ENCODE measurements at regions of chr6 and their contacts with region 1.

Region 1: GRCh38 chr6:77425671-77426070 is 37.6 kb downstream of the HTR1B start:
- DNase-seq: no peak
- ATAC-seq: no peak
- H3K4me3 ChIP-seq: no peak overlapping the region
- H3K27ac ChIP-seq: no peak overlapping the region
- H3K4me1 ChIP-seq: no peaks in the 10 kb centered on the region
- H3K27me3 ChIP-seq: no peaks in the 10 kb centered on the region
- CTCF ChIP-seq: no peak

Region 2: DNA sequence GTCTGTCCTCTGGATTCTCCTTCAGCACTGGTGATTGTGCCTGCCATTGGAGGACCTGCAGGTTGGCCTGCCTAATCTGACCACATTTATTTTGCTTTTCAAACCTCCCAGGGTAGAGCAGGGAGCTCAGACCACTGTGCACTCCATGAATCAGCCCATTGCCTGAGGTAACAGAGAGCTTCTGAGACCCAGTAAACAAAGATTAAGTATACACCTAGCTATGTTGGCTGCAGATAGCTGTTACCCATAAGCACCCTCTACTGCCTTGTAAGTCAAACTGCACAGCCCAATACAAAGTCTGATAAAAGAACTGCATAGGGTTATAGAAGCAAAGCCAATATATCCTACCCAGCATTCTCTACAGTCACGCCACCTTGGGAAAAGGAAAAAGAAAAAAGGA is 301.1 kb before region 1 on chr6:
- intact Hi-C with region 1: no loop called
- DNase-seq: no peak
- ATAC-seq: no peak
- H3K4me3 ChIP-seq: no peak overlapping the region
- H3K27ac ChIP-seq: no peak overlapping the region
- H3K4me1 ChIP-seq: no peaks in the 10 kb centered on the region
- H3K27me3 ChIP-seq: no peaks in the 10 kb centered on the region
- CTCF ChIP-seq: no peak

Region 3: DNA sequence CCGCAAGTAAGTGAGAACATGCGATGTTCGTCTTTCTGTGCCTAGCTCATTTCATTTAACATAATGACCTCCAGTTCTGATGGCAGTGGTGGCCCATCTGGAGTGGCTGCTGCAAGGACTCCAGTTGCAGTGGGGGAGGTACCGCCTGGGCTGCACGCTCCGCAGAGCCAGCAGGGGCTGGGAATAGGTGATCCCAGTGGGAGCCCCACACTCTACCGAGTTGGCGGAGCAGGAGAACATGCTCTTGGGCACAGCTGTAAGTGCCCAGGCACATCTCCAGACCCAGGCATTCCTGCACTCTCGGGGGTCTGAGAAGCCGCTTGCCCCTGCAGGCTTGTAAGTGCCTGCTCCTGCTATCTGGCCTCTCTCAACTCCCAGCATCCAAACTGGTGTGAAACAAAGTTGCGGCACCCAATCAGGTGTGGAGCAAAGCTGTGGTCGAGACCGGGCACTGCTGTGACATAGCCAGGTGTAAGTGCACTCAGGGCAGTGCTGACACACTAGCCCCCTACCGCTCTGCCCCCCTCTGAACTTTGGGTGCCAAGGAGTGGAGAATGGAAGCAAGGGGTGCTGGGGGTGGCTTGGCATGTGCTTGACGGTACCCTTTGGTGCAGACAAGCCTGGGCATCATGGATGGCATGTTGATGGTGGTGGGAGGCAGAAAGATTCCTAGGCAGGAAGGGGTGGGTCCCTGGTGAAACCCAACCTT is 92.6 kb before region 1 on chr6:
- intact Hi-C with region 1: loop called in 2 of 10 experiments (anchors 5 to 10 kb)
- DNase-seq: no peak
- ATAC-seq: no peak
- H3K4me3 ChIP-seq: no peak overlapping the region
- H3K27ac ChIP-seq: no peak overlapping the region
- H3K4me1 ChIP-seq: no peaks in the 10 kb centered on the region
- H3K27me3 ChIP-seq: no peaks in the 10 kb centered on the region
- CTCF ChIP-seq: no peak

Region 4: DNA sequence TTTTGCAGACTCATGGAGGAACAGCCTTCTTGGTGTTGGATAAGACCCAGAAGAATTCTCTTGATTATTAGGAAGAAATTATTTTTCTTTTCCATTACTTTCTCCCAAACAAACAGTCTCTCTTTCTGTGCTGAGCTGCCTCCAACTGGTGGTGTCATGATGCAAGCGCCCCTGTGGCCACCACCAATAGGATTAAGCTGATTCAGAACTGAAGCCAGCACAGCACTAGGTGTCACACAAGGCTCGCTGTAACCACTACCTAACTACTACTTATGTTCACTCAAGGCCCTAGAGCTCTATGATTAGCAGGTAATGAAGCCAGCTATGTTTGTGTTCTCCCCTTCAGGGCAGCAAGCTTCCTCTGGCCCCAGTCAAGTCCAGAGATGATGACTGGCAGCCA is 85.7 kb before region 1 on chr6:
- intact Hi-C with region 1: loop called in 2 of 10 experiments (anchors 5 to 10 kb)
- DNase-seq: no peak
- ATAC-seq: no peak
- H3K4me3 ChIP-seq: no peak overlapping the region
- H3K27ac ChIP-seq: peak overlapping the region in 8 of 10 donors; percentile 32 to 87 (median 81)
- H3K4me1 ChIP-seq: peaks cover 0 to 23% (median 10%) of the 10 kb centered on the region in 9 donors
- H3K27me3 ChIP-seq: no peaks in the 10 kb centered on the region
- CTCF ChIP-seq: peak in 1 of 9 donors; percentile 5

Region 5: GRCh38 chr6:77383026-77383425 is 42.6 kb before region 1 on chr6:
- intact Hi-C with region 1: no loop called
- DNase-seq: no peak
- ATAC-seq: no peak
- H3K4me3 ChIP-seq: no peak overlapping the region
- H3K27ac ChIP-seq: no peak overlapping the region
- H3K4me1 ChIP-seq: no peaks in the 10 kb centered on the region
- H3K27me3 ChIP-seq: no peaks in the 10 kb centered on the region
- CTCF ChIP-seq: no peak

Measured in heart right ventricle (tissue), 16 donors.